Calu3 (cell line): ENCODE measurements at regions of chr12 and their contacts with region 1.

Region 1: GRCh38 chr12:6851921-6852650 is at the start of gene USP5:
- DNase-seq: peak; percentile 97
- H3K4me3 Mint-ChIP-seq: peak within 1 kb of the TSS; percentile 94
- H3K27ac Mint-ChIP-seq: peak within 1 kb of the TSS; percentile 89
- H3K4me1 Mint-ChIP-seq: peaks cover 27% of the 10 kb centered on the region
- H3K27me3 Mint-ChIP-seq: no peaks in the 10 kb centered on the region
- CTCF ChIP-seq: no peak
- total RNA-seq, gene USP5: 126 and 128 TPM in 2 replicates

Region 2: GRCh38 chr12:5043589-5044419 is 1808.3 kb before region 1 on chr12 and contains the start of gene KCNA5:
- CTCF ChIA-PET with region 1: no interaction called
- intact Hi-C with region 1: no loop called
- DNase-seq: no peak
- H3K4me3 Mint-ChIP-seq: no peak within 1 kb of the TSS
- H3K27ac Mint-ChIP-seq: no peak within 1 kb of the TSS
- H3K4me1 Mint-ChIP-seq: no peaks in the 10 kb centered on the region
- H3K27me3 Mint-ChIP-seq: peaks cover 38% of the 10 kb centered on the region
- CTCF ChIP-seq: no peak
- total RNA-seq, gene KCNA5: not detected in 2 replicates

Region 3: GRCh38 chr12:6839482-6840201 is 12.4 kb before region 1 on chr12:
- CTCF ChIA-PET with region 1: interaction called, 10 read pairs
- intact Hi-C with region 1: loop called (anchors 1 kb)
- DNase-seq: no peak
- H3K4me3 Mint-ChIP-seq: no peak overlapping the region
- H3K27ac Mint-ChIP-seq: no peak overlapping the region
- H3K4me1 Mint-ChIP-seq: peaks cover 13% of the 10 kb centered on the region
- H3K27me3 Mint-ChIP-seq: peaks cover 67% of the 10 kb centered on the region
- CTCF ChIP-seq: no peak

Region 4: GRCh38 chr12:6890789-6891645 is 38.9 kb after region 1 on chr12:
- CTCF ChIA-PET with region 1: interaction called, 3 read pairs
- intact Hi-C with region 1: loop called (anchors 1 kb)
- DNase-seq: peak; percentile 99
- H3K4me3 Mint-ChIP-seq: peak overlapping the region; percentile 70
- H3K27ac Mint-ChIP-seq: peak overlapping the region; percentile 81
- H3K4me1 Mint-ChIP-seq: peaks cover 15% of the 10 kb centered on the region
- H3K27me3 Mint-ChIP-seq: no peaks in the 10 kb centered on the region
- CTCF ChIP-seq: peak; percentile 77